Heart left ventricle (tissue), 16 donors: ENCODE measurements at regions of chr20 and their contacts with region 1.

Region 1: DNA sequence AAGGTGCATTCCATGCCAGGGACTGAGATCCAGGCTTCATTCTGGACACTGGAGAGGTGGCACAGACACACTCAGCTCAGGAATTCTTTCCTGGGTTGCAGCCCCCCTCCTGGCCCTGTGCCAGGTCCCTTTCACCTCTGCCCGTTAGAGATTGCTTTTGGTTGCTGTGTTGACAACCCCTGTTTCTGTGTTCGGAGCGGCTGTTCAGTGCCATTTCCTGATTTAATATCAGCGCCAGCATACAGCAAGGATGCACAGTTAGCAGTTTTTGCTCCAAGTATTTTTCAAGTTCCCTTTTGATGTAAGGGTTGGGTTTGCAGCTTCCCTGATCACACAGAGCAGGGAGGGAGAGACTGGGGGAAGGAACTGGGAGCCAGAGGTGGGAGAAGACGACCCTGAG is 8.5 kb upstream of the MAFB start:
- DNase-seq: no peak
- ATAC-seq: peak in 2 of 4 donors; percentile 44 to 55
- H3K4me3 ChIP-seq: no peak overlapping the region
- H3K27ac ChIP-seq: no peak overlapping the region
- H3K4me1 ChIP-seq: peaks cover 0 to 16% (median 0%) of the 10 kb centered on the region in 12 donors
- H3K27me3 ChIP-seq: peaks cover 5 to 65% (median 32%) of the 10 kb centered on the region in 9 donors
- CTCF ChIP-seq: no peak
- POLR2A ChIP-seq: no peak

Region 2: GRCh38 chr20:40265825-40266533 is 431.6 kb before region 1 on chr20:
- intact Hi-C with region 1: loop called in 3 of 10 experiments (anchors 5 kb)
- DNase-seq: peak in 1 of 5 donors; percentile 33
- ATAC-seq: peak in 2 of 4 donors; percentile 55 to 66
- H3K4me3 ChIP-seq: no peak overlapping the region
- H3K27ac ChIP-seq: peak overlapping the region in 1 of 12 donors; percentile 9
- H3K4me1 ChIP-seq: peaks cover 0 to 25% (median 0%) of the 10 kb centered on the region in 12 donors
- H3K27me3 ChIP-seq: peaks cover 0 to 3% (median 0%) of the 10 kb centered on the region in 9 donors
- CTCF ChIP-seq: peak in 11 of 12 donors; percentile 20 to 63 (median 41)
- POLR2A ChIP-seq: no peak

Region 3: GRCh38 chr20:40738976-40739375 is 41.4 kb after region 1 on chr20:
- intact Hi-C with region 1: no loop called
- DNase-seq: no peak
- ATAC-seq: no peak
- H3K4me3 ChIP-seq: no peak overlapping the region
- H3K27ac ChIP-seq: no peak overlapping the region
- H3K4me1 ChIP-seq: no peaks in the 10 kb centered on the region
- H3K27me3 ChIP-seq: peaks cover 0 to 11% (median 0%) of the 10 kb centered on the region in 9 donors
- CTCF ChIP-seq: no peak
- POLR2A ChIP-seq: no peak